Activated naive CD4-positive, alpha-beta T cell treated with anti-CD3 and anti-CD28 coated beads, Interleukin-2, amount 10 ng/mL, durations not matched to agents 7 days and 5 days (primary cell): ENCODE measurements at regions of chr2 and their contacts with region 1.

Region 1: DNA sequence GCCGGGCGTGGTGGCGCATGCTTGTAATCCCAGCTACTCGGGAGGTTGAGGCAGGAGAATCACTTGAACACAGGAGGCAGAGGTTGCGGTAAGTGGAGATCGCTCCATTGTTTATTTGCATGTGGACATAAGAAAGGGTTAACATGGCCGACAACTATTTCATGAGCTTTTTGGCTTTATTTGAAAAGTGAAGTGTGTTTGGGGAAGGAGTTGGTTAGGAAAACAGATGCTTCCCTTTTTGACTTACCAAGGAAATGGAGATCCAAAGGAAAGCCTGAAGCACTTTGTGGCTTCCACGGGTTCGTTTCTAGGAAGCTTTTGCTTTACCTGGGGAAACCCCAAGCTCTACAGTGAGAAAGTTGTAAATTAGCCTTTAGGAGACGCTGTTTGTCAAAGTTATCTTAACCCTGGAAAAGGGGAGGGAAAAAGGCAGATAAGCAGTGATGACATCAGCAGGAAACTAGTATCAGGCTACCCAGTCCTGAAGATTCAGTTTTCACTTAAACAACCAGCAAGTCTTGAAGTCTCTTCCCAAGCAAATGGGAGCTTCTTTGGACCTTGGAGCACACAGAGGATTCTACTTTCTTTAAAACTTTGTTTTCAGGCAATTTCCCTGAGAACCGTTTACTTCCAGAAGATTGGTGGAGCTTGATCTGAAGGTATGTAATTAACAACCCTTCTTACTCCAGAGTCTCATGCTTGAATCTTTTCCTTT is at the start of gene CASP10:
- DNase-seq: peak; percentile 51
- H3K4me3 Mint-ChIP-seq: peak within 1 kb of the TSS; percentile 87
- H3K27ac Mint-ChIP-seq: peak within 1 kb of the TSS; percentile 92
- H3K4me1 Mint-ChIP-seq: peaks cover 40% of the 10 kb centered on the region
- H3K27me3 Mint-ChIP-seq: no peaks in the 10 kb centered on the region

Region 2: DNA sequence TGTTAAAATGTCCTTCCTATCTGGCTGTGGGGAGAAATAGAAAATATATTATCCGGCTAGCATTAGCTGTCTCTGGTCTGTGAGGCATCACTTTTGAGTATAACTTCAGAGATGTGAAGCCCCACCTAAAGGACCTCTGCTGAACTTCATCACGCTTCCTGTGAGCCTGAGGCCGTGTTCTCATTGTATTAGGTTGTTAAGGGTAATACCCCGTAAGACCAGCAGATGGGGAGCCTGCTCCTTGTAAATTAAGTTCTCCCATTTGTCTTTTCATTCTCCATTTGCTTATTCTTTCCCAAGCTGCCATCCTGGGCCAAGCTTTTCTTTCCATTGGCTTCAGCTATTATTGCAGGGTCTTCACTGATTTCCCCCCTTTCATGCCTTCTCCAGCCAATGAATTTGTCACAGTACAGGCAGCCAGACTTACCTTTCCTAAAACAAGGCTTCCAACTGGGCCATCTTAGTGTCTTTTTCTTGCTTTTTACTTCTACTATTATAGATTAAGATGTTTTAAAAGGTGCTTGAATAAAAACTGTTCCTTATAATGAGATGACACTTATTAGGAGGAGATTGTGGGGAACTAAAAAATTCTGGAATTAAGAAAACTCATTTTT is 281.2 kb before region 1 on chr2:
- CTCF ChIA-PET with region 1: interaction called, 30 read pairs
- DNase-seq: peak; percentile 84
- H3K4me3 Mint-ChIP-seq: no peak overlapping the region
- H3K27ac Mint-ChIP-seq: peak overlapping the region; percentile 75
- H3K4me1 Mint-ChIP-seq: peaks cover 11% of the 10 kb centered on the region
- H3K27me3 Mint-ChIP-seq: no peaks in the 10 kb centered on the region

Region 3: DNA sequence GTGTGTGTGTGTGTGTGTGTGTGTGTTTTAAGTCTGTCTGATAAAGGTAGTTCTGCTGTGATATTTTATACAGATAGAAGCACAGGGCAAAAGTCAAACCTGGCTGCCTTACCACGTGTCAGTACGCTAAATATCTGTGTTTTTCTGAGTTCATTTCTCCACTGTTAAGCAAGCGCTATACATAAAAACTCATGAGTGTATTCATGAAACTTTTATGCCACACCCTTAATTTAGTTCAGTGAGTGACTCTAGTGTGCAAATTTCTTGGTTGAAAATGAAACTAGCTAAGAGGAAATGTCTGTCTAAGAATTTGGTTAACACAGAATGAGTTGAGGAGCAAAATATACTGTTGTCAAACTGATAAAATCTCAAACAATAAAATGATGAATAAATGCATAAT is 11.3 kb after region 1 on chr2:
- CTCF ChIA-PET with region 1: interaction called, 21 read pairs
- DNase-seq: no peak
- H3K4me3 Mint-ChIP-seq: peak overlapping the region; percentile 59
- H3K27ac Mint-ChIP-seq: peak overlapping the region; percentile 91
- H3K4me1 Mint-ChIP-seq: peaks cover 81% of the 10 kb centered on the region
- H3K27me3 Mint-ChIP-seq: no peaks in the 10 kb centered on the region

Region 4: GRCh38 chr2:201220102-201220570 is 37.3 kb after region 1 on chr2:
- CTCF ChIA-PET with region 1: interaction called, 32 read pairs
- DNase-seq: no peak
- H3K4me3 Mint-ChIP-seq: no peak overlapping the region
- H3K27ac Mint-ChIP-seq: peak overlapping the region; percentile 78
- H3K4me1 Mint-ChIP-seq: peaks cover 60% of the 10 kb centered on the region
- H3K27me3 Mint-ChIP-seq: no peaks in the 10 kb centered on the region